ENCODE measurements at regions of chr19 and their contacts with region 1.

Region 1: DNA sequence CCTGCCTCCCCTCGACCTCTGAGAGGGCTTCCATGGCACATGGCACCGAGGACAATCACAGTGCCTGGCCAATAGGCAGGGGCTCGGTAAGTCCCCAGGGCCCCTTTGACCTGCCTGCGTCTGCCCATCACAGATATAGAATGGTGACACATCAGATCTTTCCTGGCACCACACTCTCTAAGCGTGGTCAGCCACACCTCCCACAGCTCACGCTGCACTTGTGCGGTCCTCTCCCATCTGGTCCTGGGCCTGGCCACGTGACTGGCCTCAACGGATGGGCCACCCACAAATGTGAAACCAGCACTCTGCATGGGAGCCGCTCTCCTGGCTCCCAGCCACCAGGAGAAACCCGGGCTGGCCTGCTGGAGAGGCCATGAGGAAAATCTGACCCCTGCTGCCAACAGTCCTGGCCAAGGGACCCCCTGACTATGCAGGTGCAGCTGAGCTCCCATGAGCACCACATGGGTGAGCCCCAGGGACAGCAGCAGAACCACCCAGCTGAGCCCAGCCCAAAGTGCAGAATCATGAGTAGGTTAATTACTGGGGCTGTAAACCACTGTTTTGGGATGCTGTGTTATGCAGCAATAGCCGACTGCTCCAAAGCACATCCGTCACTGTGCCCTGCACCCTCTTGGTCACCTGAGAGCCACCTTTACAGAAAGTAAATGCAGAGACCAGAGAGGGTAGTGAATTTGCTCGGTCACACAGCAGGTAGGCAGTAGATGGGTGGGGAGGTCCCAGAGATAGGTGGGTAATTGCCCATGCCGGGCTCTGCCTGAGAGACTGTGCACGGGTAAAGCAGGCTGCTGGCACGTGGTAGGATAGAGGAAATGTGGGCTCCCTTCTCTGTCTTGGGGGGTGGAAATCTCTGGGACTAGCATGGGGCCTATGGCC is 9.7 kb upstream of the MEF2B start:
- DNase-seq: no peak
- CTCF ChIP-seq: no peak

Region 2: DNA sequence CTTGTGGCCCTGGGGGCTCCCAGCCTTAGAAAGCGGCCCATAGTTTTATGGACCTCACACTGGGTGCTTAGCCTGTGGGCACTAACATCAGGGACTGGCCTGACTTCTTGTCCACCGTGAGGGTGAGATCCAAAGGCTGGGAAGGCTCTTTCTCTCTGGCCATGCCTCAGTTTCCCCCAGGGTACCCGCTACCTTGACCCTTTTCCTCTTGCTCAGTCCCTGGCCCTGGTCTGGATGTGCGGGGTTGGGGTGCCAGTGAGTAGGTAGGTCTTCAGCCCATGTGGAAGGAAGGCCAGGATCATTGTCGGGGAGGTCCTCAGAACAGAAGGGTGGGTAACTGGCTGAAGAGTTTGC is 39.9 kb before region 1 on chr19:
- in situ Hi-C with region 1: loop called (anchors 5 kb)
- DNase-seq: no peak
- CTCF ChIP-seq: no peak

Measured in GM13976 (cell line).